HepG2 (cell line): ENCODE measurements at regions of chr7 and their contacts with region 1.

Region 1: GRCh38 chr7:120588416-120588815 is 269.5 kb downstream of the TSPAN12 start:
- DNase-seq: no peak
- ATAC-seq: no peak
- H3K4me3 ChIP-seq: no peak overlapping the region
- H3K27ac ChIP-seq: no peak overlapping the region
- H3K4me1 ChIP-seq: no peaks in the 10 kb centered on the region
- H3K27me3 ChIP-seq: no peaks in the 10 kb centered on the region
- CTCF ChIP-seq: no peak
- EP300 ChIP-seq: no peak
- POLR2A ChIP-seq: no peak
- RAD21 ChIP-seq: no peak

Region 2: DNA sequence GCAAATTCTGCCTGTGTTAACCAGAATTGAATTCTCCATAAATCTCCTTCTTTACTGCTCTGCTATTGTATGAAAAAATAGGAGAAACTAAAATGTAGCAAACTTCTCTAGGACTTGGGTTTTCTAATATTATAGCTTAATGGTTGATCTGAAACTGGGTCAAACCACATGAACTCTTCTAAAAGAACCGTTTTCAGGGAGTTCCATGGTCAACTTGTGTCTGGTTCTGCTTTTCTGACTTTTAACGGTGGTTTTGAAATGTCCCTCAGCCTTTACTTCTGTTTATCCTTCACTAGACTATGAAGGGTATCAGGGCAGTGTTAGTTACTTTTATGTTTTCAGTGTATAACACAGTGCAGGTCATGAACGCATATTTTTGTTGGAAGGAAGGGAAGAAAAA is 27.3 kb after region 1 on chr7:
- CTCF ChIA-PET with region 1: no interaction called
- POLR2A ChIA-PET with region 1: no interaction called
- in situ Hi-C with region 1: no loop called
- intact Hi-C with region 1: no loop called
- DNase-seq: no peak
- ATAC-seq: no peak
- H3K4me3 ChIP-seq: no peak overlapping the region
- H3K27ac ChIP-seq: no peak overlapping the region
- H3K4me1 ChIP-seq: no peaks in the 10 kb centered on the region
- H3K27me3 ChIP-seq: no peaks in the 10 kb centered on the region
- CTCF ChIP-seq: no peak
- EP300 ChIP-seq: no peak
- POLR2A ChIP-seq: no peak
- RAD21 ChIP-seq: no peak

Region 3: GRCh38 chr7:120677535-120677934 is 89.1 kb after region 1 on chr7:
- CTCF ChIA-PET with region 1: no interaction called
- POLR2A ChIA-PET with region 1: no interaction called
- in situ Hi-C with region 1: no loop called
- intact Hi-C with region 1: loop called (anchors 5 kb)
- DNase-seq: no peak
- ATAC-seq: no peak
- H3K4me3 ChIP-seq: no peak overlapping the region
- H3K27ac ChIP-seq: no peak overlapping the region
- H3K4me1 ChIP-seq: no peaks in the 10 kb centered on the region
- H3K27me3 ChIP-seq: no peaks in the 10 kb centered on the region
- CTCF ChIP-seq: no peak
- EP300 ChIP-seq: no peak
- POLR2A ChIP-seq: no peak
- RAD21 ChIP-seq: no peak

Region 4: DNA sequence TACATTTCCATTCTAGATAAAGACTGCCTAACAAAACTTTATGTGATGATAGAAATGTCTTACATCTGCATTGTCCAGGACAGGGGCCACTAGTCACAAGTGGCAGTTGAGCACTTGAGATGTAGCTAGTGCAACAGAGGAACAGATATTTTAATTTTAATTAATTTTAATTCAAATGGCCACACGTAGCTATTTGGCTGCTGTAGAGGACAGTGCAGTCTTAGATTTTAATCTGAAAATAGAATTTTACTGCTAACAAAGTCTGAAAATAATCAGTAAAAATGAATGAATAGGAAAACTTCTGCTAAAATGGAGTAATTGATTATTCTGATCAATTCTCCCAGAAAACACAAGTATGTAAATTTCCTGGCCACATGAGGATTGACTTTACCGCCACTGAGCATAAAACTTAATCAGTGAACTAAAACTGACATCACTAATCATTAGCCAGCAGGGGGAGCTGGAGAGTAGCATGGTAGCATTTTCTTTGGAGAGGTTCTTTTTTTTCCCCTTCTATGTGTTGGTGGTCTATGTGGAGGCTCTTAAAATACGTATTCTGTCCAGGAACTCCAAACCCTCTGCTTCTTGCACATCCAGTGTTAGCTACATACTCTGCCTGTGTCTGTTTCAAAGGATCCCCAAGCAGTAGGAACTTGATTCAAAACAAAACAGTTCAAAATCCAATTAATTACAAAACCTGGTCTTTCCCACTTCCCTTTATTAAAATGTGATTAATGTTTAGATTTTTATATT is 217.4 kb after region 1 on chr7:
- CTCF ChIA-PET with region 1: no interaction called
- POLR2A ChIA-PET with region 1: no interaction called
- in situ Hi-C with region 1: no loop called
- intact Hi-C with region 1: no loop called
- DNase-seq: peak; percentile 44
- ATAC-seq: peak; percentile 55
- H3K4me3 ChIP-seq: no peak overlapping the region
- H3K27ac ChIP-seq: no peak overlapping the region
- H3K4me1 ChIP-seq: no peaks in the 10 kb centered on the region
- H3K27me3 ChIP-seq: no peaks in the 10 kb centered on the region
- CTCF ChIP-seq: peak; percentile 73
- EP300 ChIP-seq: no peak
- POLR2A ChIP-seq: no peak
- RAD21 ChIP-seq: no peak